Thyroid gland (tissue), 4 donors: ENCODE measurements at regions of chr18 and their contacts with region 1.

Region 1: DNA sequence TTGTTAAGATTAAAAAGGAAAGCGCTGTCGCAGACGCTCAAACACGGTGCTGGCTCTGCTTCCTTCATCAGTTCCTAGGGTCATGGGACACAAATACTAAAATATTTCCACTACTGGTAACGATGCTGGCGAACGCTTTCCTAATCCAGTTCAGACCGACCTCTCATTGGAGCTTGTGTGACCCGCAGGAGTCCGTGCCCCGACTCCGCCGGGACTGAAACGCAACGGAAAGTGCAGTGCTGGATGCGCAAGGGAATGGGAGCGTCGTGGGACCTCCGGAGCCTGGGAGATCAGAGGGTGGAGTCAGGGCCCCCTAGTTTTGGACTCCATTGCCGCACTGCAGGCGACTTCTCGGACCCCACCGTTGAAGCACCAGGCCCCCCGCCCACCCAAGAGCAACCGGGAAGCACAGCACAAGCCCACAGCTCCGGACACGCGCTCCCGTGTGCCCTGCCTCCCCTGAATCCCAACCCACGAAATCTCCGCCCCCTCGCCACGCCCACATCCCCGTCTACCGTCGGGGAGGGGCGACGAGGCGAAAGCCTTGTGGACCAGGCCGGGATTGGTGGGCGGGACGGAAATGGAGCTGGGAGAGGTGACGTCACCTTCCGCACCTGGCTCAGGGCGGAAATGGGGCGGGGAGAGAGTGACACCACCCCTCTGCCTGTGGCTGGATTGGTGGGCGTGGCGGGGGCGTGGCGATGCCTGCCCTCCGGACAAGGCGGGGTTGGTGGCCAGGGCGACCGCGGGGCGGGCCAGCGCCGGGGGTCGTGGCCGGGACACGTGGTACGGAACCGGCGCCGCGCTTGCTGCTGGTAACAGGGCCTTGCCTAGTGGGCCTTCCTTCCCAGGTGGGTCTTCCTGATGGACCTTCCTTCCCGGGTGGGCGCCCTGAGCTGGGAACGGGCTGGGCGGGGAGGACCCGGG is at the start of gene CNDP2:
- DNase-seq: peak; percentile 100
- H3K4me3 ChIP-seq: peak within 1 kb of the TSS; percentile 84 to 91 (median 89)
- H3K27ac ChIP-seq: peak within 1 kb of the TSS; percentile 90 to 97 (median 90)
- H3K4me1 ChIP-seq: peaks cover 33 to 38% of the 10 kb centered on the region in 2 donors
- H3K27me3 ChIP-seq: no peaks in the 10 kb centered on the region
- CTCF ChIP-seq: no peak
- POLR2A ChIP-seq: peak; percentile 24 to 93
- total RNA-seq, gene CNDP2: 249 to 437 (median 301) TPM

Region 2: GRCh38 chr18:74152857-74153256 is 343.0 kb before region 1 on chr18:
- intact Hi-C with region 1: loop called (anchors 10 kb)
- DNase-seq: no peak
- H3K4me3 ChIP-seq: no peak overlapping the region
- H3K27ac ChIP-seq: no peak overlapping the region
- H3K4me1 ChIP-seq: peaks cover 0 to 7% of the 10 kb centered on the region in 2 donors
- H3K27me3 ChIP-seq: no peaks in the 10 kb centered on the region
- CTCF ChIP-seq: no peak
- POLR2A ChIP-seq: no peak

Region 3: DNA sequence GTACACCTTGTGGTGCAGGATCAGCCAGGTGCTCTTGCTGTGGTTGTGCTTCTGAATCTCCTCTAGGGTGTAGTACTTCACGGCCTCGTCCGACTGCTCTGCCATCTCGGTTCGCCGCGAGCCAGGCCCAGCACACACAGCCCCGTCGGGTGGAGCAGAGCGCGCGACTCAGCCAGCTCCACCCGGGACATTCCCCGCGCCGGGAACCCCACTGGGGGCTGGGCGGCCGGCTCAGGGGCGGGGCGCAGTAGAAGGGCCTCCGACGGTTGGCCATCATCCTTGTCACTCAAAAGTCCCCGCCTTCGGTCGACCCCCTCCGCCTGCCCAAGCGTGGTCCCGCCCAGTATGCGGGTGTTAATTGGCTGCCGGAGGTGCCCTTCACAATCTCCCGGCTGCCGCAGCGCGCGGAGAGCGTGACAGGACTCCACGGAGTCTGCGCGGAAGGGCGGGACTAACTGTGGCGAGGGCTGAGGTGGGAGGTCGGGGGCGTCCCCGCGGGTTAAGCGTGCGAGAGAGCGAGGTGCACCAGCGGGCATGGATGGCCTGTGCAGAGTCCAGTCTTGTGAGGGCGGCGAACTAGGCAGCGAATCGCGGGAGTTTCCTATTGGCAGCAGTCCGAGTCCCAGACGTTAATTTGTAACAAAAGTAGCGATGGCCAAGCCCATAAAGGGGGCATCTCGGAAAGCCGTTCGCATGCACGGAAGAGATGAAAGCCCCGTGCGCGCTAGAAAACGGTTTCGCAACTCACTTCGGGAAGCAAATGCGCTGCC is 203.9 kb before region 1 on chr18 and contains the start of gene CYB5A:
- intact Hi-C with region 1: loop called (anchors 5 kb)
- DNase-seq: peak; percentile 97 to 98
- H3K4me3 ChIP-seq: peak within 1 kb of the TSS; percentile 58 to 95 (median 72)
- H3K27ac ChIP-seq: peak within 1 kb of the TSS in 2 of 3 donors; percentile 30 to 51
- H3K4me1 ChIP-seq: peaks cover 0 to 10% of the 10 kb centered on the region in 2 donors
- H3K27me3 ChIP-seq: no peaks in the 10 kb centered on the region
- CTCF ChIP-seq: peak in 1 of 6 experiments; percentile 9
- POLR2A ChIP-seq: peak in 1 of 2 donors; percentile 68
- total RNA-seq, gene CYB5A: 45.7 to 95.3 (median 64.5) TPM

Region 4: DNA sequence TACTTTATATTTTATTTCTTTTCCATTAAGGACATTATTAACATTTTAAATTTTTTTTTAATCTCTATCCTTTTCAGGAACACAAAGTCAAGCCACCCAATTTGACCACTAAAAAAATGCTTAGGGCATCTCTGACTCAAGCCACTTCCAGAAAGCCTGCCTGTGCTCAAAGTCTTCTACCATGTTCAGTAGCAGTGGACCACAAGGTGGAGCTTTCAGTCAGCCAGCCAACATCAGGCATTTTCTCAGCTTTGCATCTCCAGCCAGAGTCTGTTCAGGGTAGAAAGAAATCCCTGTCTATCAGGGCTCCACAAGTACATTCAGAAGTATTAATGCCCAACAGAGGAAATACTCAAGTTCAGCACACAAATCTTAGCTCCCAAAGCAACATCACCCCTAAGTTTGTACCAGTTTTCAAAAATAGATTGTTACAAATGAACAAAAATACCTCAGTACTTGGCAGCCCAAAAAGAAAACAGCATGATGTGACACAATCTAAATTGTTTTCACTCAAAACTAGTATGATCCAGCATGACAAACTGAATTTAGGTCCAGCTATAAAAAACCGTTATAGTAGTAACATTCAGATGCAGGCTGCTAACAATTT is 142.6 kb before region 1 on chr18:
- intact Hi-C with region 1: loop called (anchors 5 kb)
- DNase-seq: peak; percentile 66 to 67
- H3K4me3 ChIP-seq: no peak overlapping the region
- H3K27ac ChIP-seq: no peak overlapping the region
- H3K4me1 ChIP-seq: no peaks in the 10 kb centered on the region
- H3K27me3 ChIP-seq: no peaks in the 10 kb centered on the region
- CTCF ChIP-seq: peak; percentile 11 to 83 (median 69)
- POLR2A ChIP-seq: no peak

Region 5: DNA sequence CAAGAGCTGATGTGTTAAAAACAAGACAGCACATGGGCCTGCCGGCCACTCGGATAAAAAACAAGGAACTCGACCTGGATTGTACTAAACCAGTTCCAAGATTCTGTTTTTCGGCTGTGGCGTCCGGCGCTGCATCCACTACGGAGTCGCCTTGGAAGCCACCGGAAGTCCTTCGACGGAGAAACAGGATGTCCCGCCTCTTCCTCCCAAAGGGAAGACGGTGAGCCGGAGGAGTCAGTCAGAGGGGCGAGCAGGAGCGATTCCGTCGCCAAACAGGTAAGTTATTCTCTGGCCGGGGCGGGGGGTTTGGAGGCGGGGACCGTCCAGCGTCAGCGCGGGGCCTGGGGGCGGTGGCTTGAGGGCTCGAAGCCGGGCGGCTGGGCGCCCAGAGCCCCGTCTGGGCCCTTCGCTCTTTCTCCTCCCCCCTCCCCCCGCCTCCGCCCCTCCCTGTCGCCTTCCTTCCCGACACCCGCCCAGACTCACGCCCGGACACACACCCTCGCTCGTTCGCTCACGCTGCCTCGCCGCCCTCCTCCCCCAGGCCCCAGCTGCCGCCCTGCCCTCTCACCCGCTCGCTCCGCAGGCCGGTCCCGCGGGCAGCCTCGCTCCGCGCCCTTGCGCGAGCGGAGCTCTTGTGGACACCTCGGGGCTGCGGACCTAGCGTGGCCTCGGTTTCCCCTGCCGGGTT is 102.0 kb after region 1 on chr18 and contains the start of gene ZNF407:
- intact Hi-C with region 1: loop called (anchors 10 kb)
- DNase-seq: peak; percentile 85 to 87
- H3K4me3 ChIP-seq: peak within 1 kb of the TSS; percentile 77 to 88 (median 88)
- H3K27ac ChIP-seq: peak within 1 kb of the TSS; percentile 96 to 99 (median 98)
- H3K4me1 ChIP-seq: peaks cover 20 to 21% of the 10 kb centered on the region in 2 donors
- H3K27me3 ChIP-seq: no peaks in the 10 kb centered on the region
- CTCF ChIP-seq: no peak
- POLR2A ChIP-seq: no peak
- total RNA-seq, gene ZNF407: 20.2 to 40.0 (median 26.4) TPM

Region 6: DNA sequence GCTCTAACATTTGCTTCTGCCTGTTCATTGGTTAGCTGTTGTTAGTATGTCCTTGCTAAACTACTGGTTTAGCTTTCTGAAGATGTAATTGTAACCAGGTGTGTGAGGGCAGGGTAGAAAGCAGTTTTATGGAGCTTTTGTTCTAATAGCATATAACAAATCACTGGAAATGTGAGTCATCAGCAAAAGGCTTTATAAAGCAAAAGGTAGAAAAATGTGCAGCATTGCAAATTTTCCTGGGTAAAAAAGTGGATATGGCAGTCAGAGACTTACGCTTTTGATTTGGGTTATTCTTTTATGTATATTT is 187.1 kb after region 1 on chr18:
- intact Hi-C with region 1: no loop called
- DNase-seq: no peak
- H3K4me3 ChIP-seq: no peak overlapping the region
- H3K27ac ChIP-seq: no peak overlapping the region
- H3K4me1 ChIP-seq: peaks cover 4 to 5% of the 10 kb centered on the region in 2 donors
- H3K27me3 ChIP-seq: no peaks in the 10 kb centered on the region
- CTCF ChIP-seq: no peak
- POLR2A ChIP-seq: no peak

Region 7: GRCh38 chr18:75097491-75098225 is 601.8 kb after region 1 on chr18:
- intact Hi-C with region 1: no loop called
- DNase-seq: no peak
- H3K4me3 ChIP-seq: no peak overlapping the region
- H3K27ac ChIP-seq: no peak overlapping the region
- H3K4me1 ChIP-seq: no peaks in the 10 kb centered on the region
- H3K27me3 ChIP-seq: no peaks in the 10 kb centered on the region
- CTCF ChIP-seq: no peak
- POLR2A ChIP-seq: no peak